AG04450 (cell line): ENCODE measurements at regions of chr12 and their contacts with region 1.

Region 1: GRCh38 chr12:70733385-70733784 is 96.2 kb upstream of the PTPRB start:
- DNase-seq: no peak
- H3K4me3 ChIP-seq: no peak overlapping the region
- H3K27ac ChIP-seq: no peak overlapping the region
- H3K27me3 ChIP-seq: no peaks in the 10 kb centered on the region
- CTCF ChIP-seq: peak; percentile 79

Region 2: GRCh38 chr12:69879041-69879960 is 854.1 kb before region 1 on chr12:
- CTCF ChIA-PET with region 1: interaction called, 11 read pairs
- POLR2A ChIA-PET with region 1: no interaction called
- DNase-seq: peak; percentile 43
- H3K4me3 ChIP-seq: no peak overlapping the region
- H3K27ac ChIP-seq: no peak overlapping the region
- H3K27me3 ChIP-seq: peaks cover 7% of the 10 kb centered on the region
- CTCF ChIP-seq: peak; percentile 94

Region 3: DNA sequence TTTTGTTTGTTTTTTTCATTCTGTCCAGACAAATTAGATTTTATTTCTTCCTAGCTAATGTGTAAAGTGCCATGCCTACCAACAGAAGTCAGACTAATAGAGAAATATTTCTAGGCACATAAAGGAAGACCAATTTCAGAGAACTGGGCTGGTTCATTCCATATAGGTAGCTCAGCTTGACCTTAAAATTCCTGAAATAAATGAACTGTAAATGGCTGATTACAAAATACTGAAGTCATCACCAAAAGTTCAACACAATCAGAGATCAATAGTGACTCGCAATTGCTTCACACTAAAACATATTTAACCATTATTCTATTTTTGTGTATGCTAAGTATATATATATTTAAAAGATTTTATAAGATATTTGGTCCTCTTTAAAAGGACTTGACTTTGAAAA is 130.3 kb before region 1 on chr12:
- CTCF ChIA-PET with region 1: interaction called, 11 read pairs
- POLR2A ChIA-PET with region 1: no interaction called
- DNase-seq: no peak
- H3K4me3 ChIP-seq: no peak overlapping the region
- H3K27ac ChIP-seq: no peak overlapping the region
- H3K27me3 ChIP-seq: no peaks in the 10 kb centered on the region
- CTCF ChIP-seq: no peak

Region 4: DNA sequence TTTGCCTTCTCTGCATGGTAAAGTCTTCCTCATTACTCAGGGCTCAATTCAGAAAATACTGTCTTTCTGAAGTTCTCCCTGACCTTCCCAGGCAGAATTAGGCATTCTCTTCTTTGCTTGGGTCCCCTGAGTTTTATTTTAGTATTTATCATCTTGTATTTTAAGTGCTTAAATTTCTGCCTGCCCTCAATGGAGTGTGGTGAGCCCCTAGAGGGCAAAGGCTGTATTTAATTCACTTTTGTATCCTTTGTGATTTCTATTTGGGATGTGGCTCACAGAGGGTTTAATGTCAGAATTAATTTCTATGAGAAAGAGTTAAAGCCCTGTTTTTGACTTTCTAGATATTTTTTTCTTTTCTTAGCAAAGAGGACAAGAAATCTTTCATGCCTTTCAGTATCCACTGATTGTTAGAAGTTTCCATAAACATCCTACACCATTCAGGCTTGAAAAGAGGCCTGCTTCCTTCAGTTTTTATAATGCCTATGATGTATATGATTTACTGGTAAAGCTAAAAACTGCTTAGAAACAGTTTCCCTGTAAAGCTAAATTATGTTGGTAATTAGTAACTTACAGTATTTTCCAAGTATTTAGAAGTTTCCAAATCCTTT is 40.6 kb before region 1 on chr12:
- CTCF ChIA-PET with region 1: no interaction called
- POLR2A ChIA-PET with region 1: no interaction called
- DNase-seq: no peak
- H3K4me3 ChIP-seq: no peak overlapping the region
- H3K27ac ChIP-seq: no peak overlapping the region
- H3K27me3 ChIP-seq: no peaks in the 10 kb centered on the region
- CTCF ChIP-seq: peak; percentile 55

Region 5: GRCh38 chr12:70719672-70720420 is 13.5 kb before region 1 on chr12:
- CTCF ChIA-PET with region 1: interaction called, 14 read pairs
- POLR2A ChIA-PET with region 1: no interaction called
- DNase-seq: no peak
- H3K4me3 ChIP-seq: peak overlapping the region; percentile 37; the same call in 1 of the 2 replicates
- H3K27ac ChIP-seq: no peak overlapping the region
- H3K27me3 ChIP-seq: no peaks in the 10 kb centered on the region
- CTCF ChIP-seq: peak; percentile 98

Region 6: DNA sequence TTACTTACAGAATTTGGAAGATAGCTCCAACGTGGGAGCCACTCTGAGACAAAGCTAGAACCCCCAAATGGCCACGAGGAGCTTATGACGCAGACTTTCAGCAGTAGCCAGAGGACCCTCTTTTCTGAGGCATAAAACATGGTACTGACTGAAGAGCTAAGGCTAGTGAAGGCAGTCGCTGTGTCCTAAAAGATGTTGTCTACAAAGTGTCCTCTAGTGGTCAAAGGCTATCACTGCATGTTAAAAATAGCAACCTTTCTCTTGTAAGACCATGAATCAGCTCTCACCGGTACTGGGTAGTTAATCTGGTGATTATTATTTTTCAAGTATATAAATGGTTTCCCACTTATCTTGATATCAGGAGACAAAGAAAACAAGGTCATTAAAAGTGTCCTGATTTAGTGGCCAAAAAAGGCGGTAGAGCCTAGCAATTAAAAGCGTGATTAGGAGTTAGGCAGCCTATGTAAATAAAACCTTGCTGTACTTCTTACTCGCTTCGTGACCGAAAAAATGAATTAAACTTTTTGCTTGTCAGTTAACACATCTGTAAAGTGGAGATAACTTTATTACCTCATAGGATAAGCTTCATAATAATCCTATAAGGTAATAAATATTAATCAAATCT is 659.2 kb after region 1 on chr12:
- CTCF ChIA-PET with region 1: interaction called, 21 read pairs
- POLR2A ChIA-PET with region 1: no interaction called
- DNase-seq: peak; percentile 37
- H3K4me3 ChIP-seq: no peak overlapping the region
- H3K27ac ChIP-seq: no peak overlapping the region
- H3K27me3 ChIP-seq: no peaks in the 10 kb centered on the region
- CTCF ChIP-seq: peak; percentile 88